Activated T-helper 1 cell treated with anti-CD3 and anti-CD28 coated beads, Interleukin-12 subunit alpha, Interleukin-12 subunit beta, Interleukin-2, Interleukin-4 antibody, amounts not matched to agents 30 ng/mL and 10 ng/mL and 1 ng/mL, durations not matched to agents 14 hours and 24 hours and 36 hours (primary cell): ENCODE measurements at regions of chr14 and their contacts with region 1.

Region 1: DNA sequence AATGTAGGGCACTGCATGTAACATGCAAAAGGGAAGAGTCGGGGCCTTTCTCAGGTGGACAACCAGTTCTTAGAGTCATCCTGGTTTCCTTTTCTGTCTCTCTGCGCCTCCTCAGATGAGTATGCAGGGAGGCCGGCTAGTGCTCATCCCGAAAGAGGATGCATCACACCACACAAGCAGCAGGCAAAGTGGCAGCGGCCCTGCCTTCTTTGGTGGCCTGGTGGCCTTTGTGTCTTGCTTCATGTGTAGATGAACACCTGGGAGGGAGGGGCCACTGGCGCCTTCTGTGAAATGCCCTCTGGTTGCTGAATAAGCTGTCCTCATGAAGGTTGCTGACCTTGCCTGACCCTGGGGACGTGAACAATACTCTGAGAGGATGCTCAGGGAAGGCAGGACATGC is 18.0 kb downstream of the SLC24A4 start:
- DNase-seq: no peak
- H3K4me3 Mint-ChIP-seq: peak overlapping the region; percentile 16
- H3K27ac Mint-ChIP-seq: peak overlapping the region; percentile 53
- H3K4me1 Mint-ChIP-seq: peaks cover 17% of the 10 kb centered on the region
- H3K27me3 Mint-ChIP-seq: peaks cover 30% of the 10 kb centered on the region

Region 2: DNA sequence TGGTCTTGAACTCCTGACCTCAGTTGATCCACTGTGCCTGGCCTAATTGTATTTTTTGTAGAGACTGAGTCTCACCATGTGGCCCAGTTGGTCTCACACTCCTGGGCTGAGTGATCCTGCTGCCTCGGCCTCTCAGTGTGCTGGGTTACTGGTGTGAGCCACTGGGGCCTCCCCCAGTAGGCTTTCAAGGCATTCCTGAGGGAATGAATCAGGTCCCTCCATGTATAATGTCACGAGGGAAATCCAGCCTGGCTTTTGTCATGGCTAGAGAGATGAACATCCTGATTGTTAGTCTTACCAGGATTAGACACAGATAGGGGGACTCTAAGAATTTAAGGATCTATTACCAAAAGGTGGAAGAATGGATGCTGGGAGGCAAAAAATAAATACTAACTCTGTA is 167.3 kb before region 1 on chr14:
- intact Hi-C with region 1: no loop called
- DNase-seq: no peak
- H3K4me3 Mint-ChIP-seq: no peak overlapping the region
- H3K27ac Mint-ChIP-seq: no peak overlapping the region
- H3K4me1 Mint-ChIP-seq: no peaks in the 10 kb centered on the region
- H3K27me3 Mint-ChIP-seq: no peaks in the 10 kb centered on the region

Region 3: DNA sequence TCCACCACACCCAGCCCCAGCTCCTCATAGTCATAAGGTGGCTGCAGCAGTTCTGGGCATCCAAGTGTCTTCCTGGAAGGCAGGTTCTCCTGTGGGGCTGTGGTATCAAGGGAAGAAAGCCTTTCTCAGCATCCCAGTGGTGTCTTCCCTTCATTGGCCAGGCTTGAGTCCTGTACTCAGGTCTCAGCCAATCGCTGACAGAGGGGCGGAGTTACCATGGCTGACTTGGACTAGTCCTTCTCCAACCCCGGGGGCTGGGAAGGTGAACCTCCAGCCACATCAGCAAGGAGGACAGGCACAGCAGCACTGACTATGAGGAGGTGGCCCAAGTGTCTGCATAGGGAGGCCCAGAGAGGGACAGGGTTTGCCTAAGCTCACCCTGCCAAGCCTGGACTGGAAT is 82.0 kb before region 1 on chr14:
- intact Hi-C with region 1: loop called (anchors 1 kb)
- DNase-seq: no peak
- H3K4me3 Mint-ChIP-seq: no peak overlapping the region
- H3K27ac Mint-ChIP-seq: no peak overlapping the region
- H3K4me1 Mint-ChIP-seq: peaks cover 32% of the 10 kb centered on the region
- H3K27me3 Mint-ChIP-seq: peaks cover 48% of the 10 kb centered on the region

Region 4: DNA sequence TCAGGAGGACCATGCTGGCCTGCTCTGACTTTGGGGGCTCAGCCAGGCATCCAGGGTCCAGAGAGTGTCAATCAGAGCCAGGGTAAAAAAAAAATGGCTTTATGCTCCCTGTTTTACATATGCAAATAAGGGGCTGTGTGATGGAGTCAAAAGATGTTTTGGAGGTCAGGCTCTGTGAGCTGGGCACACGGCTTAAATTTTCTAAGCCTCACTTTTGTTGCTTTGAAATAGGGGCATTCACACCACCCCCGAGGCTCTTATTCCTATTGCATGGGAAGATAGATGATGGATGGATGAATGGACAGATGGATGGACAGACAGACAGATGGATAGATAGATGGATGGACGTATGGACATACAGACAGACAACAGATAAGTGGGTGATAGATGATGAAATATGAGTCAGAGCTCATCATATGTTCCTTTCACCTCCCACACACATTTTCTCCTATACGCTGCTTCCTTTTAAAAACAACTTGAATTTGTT is 215.4 kb after region 1 on chr14:
- intact Hi-C with region 1: loop called (anchors 1 kb)
- DNase-seq: no peak
- H3K4me3 Mint-ChIP-seq: peak overlapping the region; percentile 28
- H3K27ac Mint-ChIP-seq: peak overlapping the region; percentile 92
- H3K4me1 Mint-ChIP-seq: peaks cover 71% of the 10 kb centered on the region
- H3K27me3 Mint-ChIP-seq: no peaks in the 10 kb centered on the region

Region 5: DNA sequence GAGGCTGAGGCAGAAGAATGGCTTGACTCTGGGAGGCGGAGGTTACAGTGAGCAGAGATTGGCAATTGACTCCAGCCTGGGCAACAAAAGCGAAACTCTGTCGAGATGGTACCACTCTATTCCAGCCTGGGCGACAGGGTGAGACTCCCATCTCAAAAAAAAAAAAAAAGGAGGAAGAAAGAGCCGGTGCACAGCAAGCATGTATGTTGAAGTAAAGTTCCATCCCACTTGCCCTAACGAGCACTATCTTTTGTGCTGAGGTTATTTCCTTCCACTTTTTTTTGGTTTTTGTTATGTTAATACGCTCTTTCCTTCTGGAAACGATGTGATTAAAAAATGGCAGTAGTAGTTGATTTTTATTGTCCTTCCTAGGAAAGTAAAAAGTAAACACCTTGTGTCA is 433.6 kb after region 1 on chr14:
- intact Hi-C with region 1: loop called (anchors 2 kb)
- DNase-seq: no peak
- H3K4me3 Mint-ChIP-seq: no peak overlapping the region
- H3K27ac Mint-ChIP-seq: peak overlapping the region; percentile 74
- H3K4me1 Mint-ChIP-seq: peaks cover 36% of the 10 kb centered on the region
- H3K27me3 Mint-ChIP-seq: peaks cover 35% of the 10 kb centered on the region